Activated CD4-positive, alpha-beta memory T cell treated with anti-CD3 and anti-CD28 coated beads for 36 hours (primary cell): ENCODE measurements at regions of chr5 and their contacts with region 1.

Region 1: GRCh38 chr5:55421074-55421529 is 113.3 kb downstream of the MTREX start:
- DNase-seq: peak; percentile 37
- H3K4me3 Mint-ChIP-seq: no peak overlapping the region
- H3K27ac Mint-ChIP-seq: peak overlapping the region; percentile 15
- H3K4me1 Mint-ChIP-seq: peaks cover 34% of the 10 kb centered on the region
- H3K27me3 Mint-ChIP-seq: no peaks in the 10 kb centered on the region

Region 2: GRCh38 chr5:55290991-55291390 is 130.1 kb before region 1 on chr5:
- CTCF ChIA-PET with region 1: no interaction called
- POLR2A ChIA-PET with region 1: no interaction called
- intact Hi-C with region 1: no loop called
- DNase-seq: no peak
- H3K4me3 Mint-ChIP-seq: no peak overlapping the region
- H3K27ac Mint-ChIP-seq: no peak overlapping the region
- H3K4me1 Mint-ChIP-seq: no peaks in the 10 kb centered on the region
- H3K27me3 Mint-ChIP-seq: no peaks in the 10 kb centered on the region

Region 3: GRCh38 chr5:55338810-55339243 is 82.3 kb before region 1 on chr5:
- CTCF ChIA-PET with region 1: no interaction called
- POLR2A ChIA-PET with region 1: no interaction called
- intact Hi-C with region 1: loop called (anchors 1 kb)
- DNase-seq: peak; percentile 81
- H3K4me3 Mint-ChIP-seq: no peak overlapping the region
- H3K27ac Mint-ChIP-seq: peak overlapping the region; percentile 54
- H3K4me1 Mint-ChIP-seq: peaks cover 21% of the 10 kb centered on the region
- H3K27me3 Mint-ChIP-seq: no peaks in the 10 kb centered on the region

Region 4: GRCh38 chr5:55370291-55370925 is 50.7 kb before region 1 on chr5:
- CTCF ChIA-PET with region 1: no interaction called
- POLR2A ChIA-PET with region 1: no interaction called
- intact Hi-C with region 1: no loop called
- DNase-seq: no peak
- H3K4me3 Mint-ChIP-seq: no peak overlapping the region
- H3K27ac Mint-ChIP-seq: no peak overlapping the region
- H3K4me1 Mint-ChIP-seq: no peaks in the 10 kb centered on the region
- H3K27me3 Mint-ChIP-seq: no peaks in the 10 kb centered on the region

Region 5: GRCh38 chr5:55439008-55439407 is 17.9 kb after region 1 on chr5:
- CTCF ChIA-PET with region 1: interaction called, 4 read pairs
- POLR2A ChIA-PET with region 1: no interaction called
- intact Hi-C with region 1: loop called (anchors 1 kb)
- DNase-seq: no peak
- H3K4me3 Mint-ChIP-seq: no peak overlapping the region
- H3K27ac Mint-ChIP-seq: no peak overlapping the region
- H3K4me1 Mint-ChIP-seq: peaks cover 44% of the 10 kb centered on the region
- H3K27me3 Mint-ChIP-seq: no peaks in the 10 kb centered on the region

Region 6: DNA sequence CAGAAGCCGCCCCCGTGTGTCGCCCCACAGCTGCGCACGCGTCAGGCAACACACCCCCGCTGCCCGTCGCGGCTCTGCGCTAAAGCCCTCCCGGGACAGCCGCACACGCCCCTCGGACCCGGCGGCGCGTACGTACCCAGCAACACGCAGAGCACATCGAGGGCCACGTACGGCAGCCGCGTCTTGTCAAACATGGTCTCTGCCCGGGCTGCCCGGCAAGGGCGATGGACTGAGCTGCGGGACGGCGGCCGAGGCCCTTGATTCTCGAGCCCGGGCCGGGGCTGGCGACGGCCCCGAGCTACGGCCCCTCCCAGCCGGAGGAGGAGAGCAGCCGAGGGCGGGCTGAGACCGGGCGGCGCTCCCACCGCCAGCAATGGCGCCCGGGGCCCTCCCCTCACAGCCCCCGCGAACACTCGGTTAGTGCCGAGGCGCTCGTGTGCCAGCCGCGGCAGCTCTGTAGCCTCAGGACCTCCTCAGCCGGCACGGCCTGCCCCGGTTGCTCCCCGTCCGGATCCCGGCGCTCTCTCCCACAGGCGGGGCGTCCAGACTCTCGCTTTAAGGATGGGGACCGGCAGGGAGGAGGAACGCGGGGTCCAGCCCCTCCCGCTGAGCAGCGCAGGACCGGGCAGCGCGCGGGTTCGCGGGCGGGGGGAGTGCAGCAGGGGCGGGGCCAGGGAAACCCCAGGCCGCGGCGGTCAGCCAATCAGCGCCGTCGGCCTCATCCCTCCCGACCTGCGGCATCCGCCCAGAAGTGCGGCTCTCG is 113.5 kb after region 1 on chr5 and contains the start of gene PLPP1:
- CTCF ChIA-PET with region 1: no interaction called
- POLR2A ChIA-PET with region 1: no interaction called
- intact Hi-C with region 1: loop called (anchors 1 kb)
- DNase-seq: peak; percentile 89
- H3K4me3 Mint-ChIP-seq: peak within 1 kb of the TSS; percentile 85
- H3K27ac Mint-ChIP-seq: peak within 1 kb of the TSS; percentile 77
- H3K4me1 Mint-ChIP-seq: peaks cover 24% of the 10 kb centered on the region
- H3K27me3 Mint-ChIP-seq: no peaks in the 10 kb centered on the region
- total RNA-seq, gene PLPP1: 6.7 to 7.2 TPM

Region 7: DNA sequence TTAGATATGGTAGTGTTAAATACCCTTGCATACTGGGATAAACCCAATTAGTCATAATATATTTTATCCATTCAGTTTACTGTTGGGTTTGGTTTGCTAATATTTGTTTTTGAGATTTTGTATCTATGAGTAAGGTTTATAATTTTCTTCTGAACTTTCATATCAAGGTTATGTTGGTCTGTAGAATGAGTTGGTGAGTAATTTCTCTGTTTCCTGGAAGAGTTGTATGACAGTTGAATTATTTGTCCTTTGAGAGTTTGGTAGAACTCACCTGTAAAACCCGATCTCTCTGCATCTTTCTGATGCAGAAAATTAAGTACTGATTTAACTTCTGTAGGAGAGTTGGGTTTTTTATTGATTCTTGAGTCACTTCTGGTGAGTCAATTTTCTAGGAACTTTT is 337.1 kb after region 1 on chr5:
- CTCF ChIA-PET with region 1: no interaction called
- POLR2A ChIA-PET with region 1: no interaction called
- intact Hi-C with region 1: loop called (anchors 1 kb)
- DNase-seq: no peak
- H3K4me3 Mint-ChIP-seq: no peak overlapping the region
- H3K27ac Mint-ChIP-seq: peak overlapping the region; percentile 23
- H3K4me1 Mint-ChIP-seq: peaks cover 20% of the 10 kb centered on the region
- H3K27me3 Mint-ChIP-seq: peaks cover 17% of the 10 kb centered on the region